ENCODE measurements at regions of chr14 and their contacts with region 1.

Region 1: DNA sequence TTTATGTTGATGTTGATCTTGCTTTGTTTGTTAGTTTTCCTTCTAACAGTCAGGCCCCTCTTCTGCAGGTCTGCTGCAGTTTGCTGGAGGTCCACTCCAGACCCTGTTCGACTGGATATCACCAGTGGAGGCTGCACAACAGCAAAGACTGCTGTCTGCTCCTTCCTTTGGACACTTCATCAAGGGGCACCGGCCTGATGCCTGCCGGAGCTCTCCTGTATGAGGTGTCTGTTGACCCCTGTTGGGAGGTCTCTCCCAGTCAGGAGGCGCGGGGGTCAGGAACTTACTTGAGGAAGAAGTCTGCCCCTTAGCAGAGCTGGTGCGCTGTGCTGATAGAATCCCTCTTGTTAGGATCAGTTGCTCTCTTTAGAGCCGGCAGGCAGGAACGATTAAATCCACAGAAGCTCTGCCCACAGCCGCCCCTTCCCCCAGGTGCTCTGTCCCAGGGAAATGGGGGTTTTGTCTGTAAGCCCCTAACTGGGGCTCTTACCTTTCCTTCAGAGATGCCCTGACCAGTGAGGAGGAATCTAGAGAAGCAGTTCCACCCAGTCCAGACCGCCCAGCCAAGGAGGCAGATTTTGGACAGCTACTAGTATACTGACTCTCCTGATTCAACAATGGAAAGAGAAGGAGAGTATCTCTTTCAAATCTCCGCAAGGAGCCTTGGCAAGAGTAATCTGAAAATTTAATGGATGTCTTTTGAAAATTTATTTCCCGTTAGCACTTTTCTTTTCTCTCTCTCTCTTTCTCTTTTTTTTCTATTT is 25.2 kb downstream of the MIA2 start:
- DNase-seq: no peak
- H3K4me3 ChIP-seq: no peak overlapping the region
- H3K27ac ChIP-seq: no peak overlapping the region
- H3K27me3 ChIP-seq: no peaks in the 10 kb centered on the region
- CTCF ChIP-seq: no peak

Region 2: DNA sequence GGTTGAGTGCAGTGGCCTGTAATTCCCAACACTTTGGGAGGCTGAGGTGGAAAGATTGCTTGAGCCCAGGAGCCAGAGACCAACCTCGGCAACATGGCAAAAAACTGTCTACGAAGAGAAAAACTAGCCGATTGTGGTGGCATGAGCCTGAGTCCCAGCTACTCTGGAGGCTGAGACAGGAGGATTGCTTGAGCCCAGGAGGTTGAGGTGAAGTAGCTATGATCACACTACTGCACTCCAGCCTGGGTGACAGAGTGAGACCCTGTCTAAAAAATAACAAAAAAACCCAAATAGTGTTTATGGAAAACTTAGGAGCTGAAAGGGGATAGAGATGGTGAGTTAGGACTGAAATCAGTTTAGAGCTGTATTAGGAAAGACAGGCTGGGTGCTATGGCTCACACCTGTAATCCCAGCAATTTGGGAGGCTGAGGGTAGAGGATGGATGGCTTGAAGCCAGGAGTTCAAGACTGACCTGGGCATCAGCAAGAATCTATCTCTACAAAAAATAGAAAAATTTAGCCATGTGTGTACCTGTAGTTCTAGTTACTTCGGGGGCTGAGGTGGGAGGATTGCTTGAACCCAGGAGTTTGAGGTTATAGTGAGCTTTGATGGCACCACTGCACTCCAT is 74.2 kb before region 1 on chr14:
- CTCF ChIA-PET with region 1: no interaction called
- POLR2A ChIA-PET with region 1: no interaction called
- DNase-seq: no peak
- H3K4me3 ChIP-seq: no peak overlapping the region
- H3K27ac ChIP-seq: no peak overlapping the region
- H3K27me3 ChIP-seq: no peaks in the 10 kb centered on the region
- CTCF ChIP-seq: no peak

Region 3: GRCh38 chr14:39247256-39247655 is 11.7 kb before region 1 on chr14:
- CTCF ChIA-PET with region 1: no interaction called
- POLR2A ChIA-PET with region 1: interaction called, 10 read pairs
- DNase-seq: peak; percentile 78
- H3K4me3 ChIP-seq: no peak overlapping the region
- H3K27ac ChIP-seq: no peak overlapping the region
- H3K27me3 ChIP-seq: peaks cover 2% of the 10 kb centered on the region
- CTCF ChIP-seq: no peak

Region 4: GRCh38 chr14:39302124-39302810 is 43.3 kb after region 1 on chr14:
- CTCF ChIA-PET with region 1: no interaction called
- POLR2A ChIA-PET with region 1: no interaction called
- DNase-seq: no peak
- H3K4me3 ChIP-seq: no peak overlapping the region
- H3K27ac ChIP-seq: no peak overlapping the region
- H3K27me3 ChIP-seq: no peaks in the 10 kb centered on the region
- CTCF ChIP-seq: no peak

Measured in AG04450 (cell line).